ENCODE measurements at regions of chr4 and their contacts with region 1.

Region 1: DNA sequence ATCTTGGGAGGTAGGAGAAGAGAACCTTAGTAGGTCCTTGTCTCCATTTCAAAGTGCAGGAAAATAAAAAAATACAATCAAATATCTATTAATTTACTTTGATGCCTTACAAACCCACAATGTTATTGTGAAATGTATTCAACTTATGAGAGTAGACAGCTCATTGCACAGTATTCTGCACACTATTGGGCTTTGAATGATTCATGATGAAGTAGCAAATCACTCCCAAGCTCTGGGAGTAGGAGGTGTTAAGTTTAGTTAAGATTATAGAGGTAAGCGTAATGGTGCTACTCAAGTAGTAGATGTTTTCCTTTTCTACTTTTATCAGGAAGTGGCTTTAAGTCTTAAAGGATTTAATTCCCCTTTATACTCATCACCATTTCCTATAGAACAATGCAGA is 32.8 kb upstream of the TMPRSS11A start:
- DNase-seq: no peak
- H3K4me3 ChIP-seq: no peak overlapping the region
- H3K27ac ChIP-seq: no peak overlapping the region
- H3K4me1 ChIP-seq: no peaks in the 10 kb centered on the region
- H3K27me3 ChIP-seq: no peaks in the 10 kb centered on the region
- CTCF ChIP-seq: no peak
- EP300 ChIP-seq: no peak
- POLR2A ChIP-seq: no peak

Region 2: DNA sequence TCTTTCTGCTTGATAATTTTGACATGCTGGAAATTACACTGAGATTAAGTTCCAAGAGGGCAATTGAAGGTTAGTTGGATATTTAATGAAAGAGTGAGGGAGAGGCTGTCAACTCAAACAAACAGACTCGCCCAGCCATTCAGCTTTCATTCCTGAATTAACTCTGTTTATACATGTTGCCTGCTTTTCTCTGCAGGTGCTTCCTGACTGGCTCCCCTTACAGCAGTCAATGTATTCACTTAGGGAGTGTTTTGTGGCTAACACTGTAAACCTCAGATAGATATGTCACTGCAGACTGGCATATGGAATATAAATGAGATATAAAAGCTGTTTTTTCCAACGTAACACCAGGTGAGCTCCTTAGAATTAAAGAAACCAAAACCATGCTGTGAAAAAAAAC is 61.5 kb before region 1 on chr4:
- intact Hi-C with region 1: no loop called
- DNase-seq: no peak
- H3K4me3 ChIP-seq: no peak overlapping the region
- H3K27ac ChIP-seq: no peak overlapping the region
- H3K4me1 ChIP-seq: no peaks in the 10 kb centered on the region
- H3K27me3 ChIP-seq: no peaks in the 10 kb centered on the region
- CTCF ChIP-seq: no peak
- EP300 ChIP-seq: no peak
- POLR2A ChIP-seq: no peak

Region 3: DNA sequence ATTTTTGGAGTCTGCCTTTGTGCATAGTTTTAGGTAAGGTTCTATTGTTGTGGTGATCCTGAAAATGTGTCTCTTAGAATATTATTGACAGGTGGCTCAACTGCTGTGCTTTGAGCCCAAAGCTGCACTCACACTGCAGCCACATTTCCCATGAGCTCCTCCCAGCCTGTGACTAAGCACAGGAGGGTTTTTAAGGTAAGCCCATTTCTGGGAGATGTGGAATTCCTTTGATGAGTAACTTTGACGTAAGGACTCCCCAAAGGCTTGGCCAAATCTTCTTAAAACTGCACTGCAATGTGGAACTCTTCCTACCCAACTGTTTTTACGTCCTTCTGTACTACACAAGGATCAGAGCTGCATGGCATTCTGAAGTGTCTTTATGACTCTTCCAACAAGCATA is 12.8 kb before region 1 on chr4:
- intact Hi-C with region 1: loop called (anchors 1 kb)
- DNase-seq: no peak
- H3K4me3 ChIP-seq: no peak overlapping the region
- H3K27ac ChIP-seq: no peak overlapping the region
- H3K4me1 ChIP-seq: no peaks in the 10 kb centered on the region
- H3K27me3 ChIP-seq: no peaks in the 10 kb centered on the region
- CTCF ChIP-seq: no peak
- EP300 ChIP-seq: no peak
- POLR2A ChIP-seq: no peak